Tibial artery (tissue), 4 donors: ENCODE measurements at regions of chr10 and their contacts with region 1.

Region 1: DNA sequence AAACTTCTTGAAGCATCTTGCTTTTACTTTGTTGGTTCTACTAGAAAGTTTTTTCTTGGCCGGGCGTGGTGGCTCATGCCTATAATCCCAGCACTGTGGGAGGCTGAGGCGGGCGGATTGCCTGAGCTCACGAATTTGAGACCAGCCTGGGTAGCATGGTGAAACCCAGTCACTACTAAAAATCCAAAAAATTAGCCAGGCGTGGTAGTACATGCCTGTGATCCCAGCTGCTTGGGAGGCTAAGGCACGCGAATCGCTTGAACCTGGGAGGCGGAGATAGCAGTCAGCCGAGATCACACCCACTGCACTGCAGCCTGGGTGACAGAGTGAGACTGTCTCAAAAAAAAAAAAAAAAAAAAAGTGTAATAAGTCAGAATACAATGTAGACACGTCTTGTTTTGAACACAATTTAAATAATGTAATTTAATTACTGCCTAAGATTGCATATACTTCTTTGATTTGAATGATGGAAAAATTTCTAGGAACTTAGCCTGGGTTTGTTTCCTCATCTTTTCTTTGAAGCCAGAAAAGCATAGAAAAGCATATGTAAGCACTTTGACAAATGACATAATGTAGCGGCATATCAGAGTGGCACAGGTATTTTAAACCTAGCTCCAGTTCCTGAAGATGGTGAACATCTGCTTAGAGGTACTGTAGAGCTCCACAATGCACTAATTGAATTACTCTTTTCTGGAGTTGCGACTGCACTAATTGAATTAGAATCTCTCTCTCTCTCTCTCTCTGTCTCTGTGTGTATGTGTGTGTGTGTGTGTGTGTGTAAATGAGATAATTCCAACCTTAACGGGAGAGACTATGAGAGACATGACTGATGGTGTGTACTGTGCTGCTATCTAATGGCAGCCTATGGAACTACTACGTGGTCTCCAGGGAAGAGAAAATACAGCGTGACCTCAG is 87.8 kb downstream of the BTRC start:
- DNase-seq: no peak
- H3K4me3 ChIP-seq: no peak overlapping the region
- H3K27ac ChIP-seq: no peak overlapping the region
- H3K4me1 ChIP-seq: peaks cover 0 to 8% (median 0%) of the 10 kb centered on the region in 4 donors
- H3K27me3 ChIP-seq: no peaks in the 10 kb centered on the region
- CTCF ChIP-seq: peak; percentile 43 to 53

Region 2: GRCh38 chr10:100743626-100744135 is 698.1 kb before region 1 on chr10:
- intact Hi-C with region 1: no loop called
- DNase-seq: no peak
- H3K4me3 ChIP-seq: no peak overlapping the region
- H3K27ac ChIP-seq: no peak overlapping the region
- H3K4me1 ChIP-seq: peaks cover 5 to 80% (median 63%) of the 10 kb centered on the region in 4 donors
- H3K27me3 ChIP-seq: peaks cover 22 to 98% of the 10 kb centered on the region in 2 donors
- CTCF ChIP-seq: peak; percentile 31 to 36

Region 3: GRCh38 chr10:101301249-101301711 is 140.5 kb before region 1 on chr10:
- intact Hi-C with region 1: loop called (anchors 10 kb)
- DNase-seq: no peak
- H3K4me3 ChIP-seq: no peak overlapping the region
- H3K27ac ChIP-seq: no peak overlapping the region
- H3K4me1 ChIP-seq: no peaks in the 10 kb centered on the region
- H3K27me3 ChIP-seq: peaks cover 0 to 72% of the 10 kb centered on the region in 2 donors
- CTCF ChIP-seq: no peak

Region 4: DNA sequence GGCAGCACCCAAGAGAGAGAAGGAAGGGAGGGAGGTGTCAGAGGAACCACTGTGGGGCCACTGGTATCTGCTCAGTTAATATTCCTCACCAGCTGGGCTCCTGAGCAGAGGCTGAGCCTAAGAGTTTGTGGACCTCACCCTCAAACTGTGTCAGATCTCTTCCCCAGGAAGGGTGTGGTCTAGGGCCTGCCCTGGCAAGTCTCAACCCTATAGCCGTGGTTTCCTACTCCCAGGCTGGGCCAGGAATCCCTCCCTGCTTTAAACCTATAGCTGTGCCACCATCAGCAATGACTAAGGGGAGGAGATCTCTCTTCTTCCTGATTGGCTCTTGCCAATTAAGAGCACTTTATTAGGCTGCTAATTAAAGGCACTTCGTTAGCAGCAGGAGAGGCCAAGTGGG is 116.4 kb after region 1 on chr10:
- intact Hi-C with region 1: no loop called
- DNase-seq: no peak
- H3K4me3 ChIP-seq: no peak overlapping the region
- H3K27ac ChIP-seq: no peak overlapping the region
- H3K4me1 ChIP-seq: peaks cover 0 to 4% (median 0%) of the 10 kb centered on the region in 4 donors
- H3K27me3 ChIP-seq: peaks cover 0 to 36% of the 10 kb centered on the region in 2 donors
- CTCF ChIP-seq: no peak